HepG2 (cell line): ENCODE measurements at regions of chr2 and their contacts with region 1.

Region 1: GRCh38 chr2:86562922-86563649 is at the start of gene CHMP3:
- DNase-seq: peak; percentile 97
- ATAC-seq: peak; percentile 92
- H3K4me3 ChIP-seq: peak within 1 kb of the TSS; percentile 75 to 91 (median 88)
- H3K27ac ChIP-seq: peak within 1 kb of the TSS; percentile 97
- H3K4me1 ChIP-seq: peaks cover 40% of the 10 kb centered on the region
- H3K27me3 ChIP-seq: no peaks in the 10 kb centered on the region; a peak in 1 of 5 replicates
- CTCF ChIP-seq: 0 out of 2 replicates have a peak, but pooled peaks have one; percentile 16
- EP300 ChIP-seq: no peak
- POLR2A ChIP-seq: peak; percentile 79 to 87
- RAD21 ChIP-seq: 0 out of 2 replicates have a peak, but pooled peaks have one; percentile 28
- total RNA-seq, gene CHMP3: 114 and 154 TPM in 2 replicates

Region 2: DNA sequence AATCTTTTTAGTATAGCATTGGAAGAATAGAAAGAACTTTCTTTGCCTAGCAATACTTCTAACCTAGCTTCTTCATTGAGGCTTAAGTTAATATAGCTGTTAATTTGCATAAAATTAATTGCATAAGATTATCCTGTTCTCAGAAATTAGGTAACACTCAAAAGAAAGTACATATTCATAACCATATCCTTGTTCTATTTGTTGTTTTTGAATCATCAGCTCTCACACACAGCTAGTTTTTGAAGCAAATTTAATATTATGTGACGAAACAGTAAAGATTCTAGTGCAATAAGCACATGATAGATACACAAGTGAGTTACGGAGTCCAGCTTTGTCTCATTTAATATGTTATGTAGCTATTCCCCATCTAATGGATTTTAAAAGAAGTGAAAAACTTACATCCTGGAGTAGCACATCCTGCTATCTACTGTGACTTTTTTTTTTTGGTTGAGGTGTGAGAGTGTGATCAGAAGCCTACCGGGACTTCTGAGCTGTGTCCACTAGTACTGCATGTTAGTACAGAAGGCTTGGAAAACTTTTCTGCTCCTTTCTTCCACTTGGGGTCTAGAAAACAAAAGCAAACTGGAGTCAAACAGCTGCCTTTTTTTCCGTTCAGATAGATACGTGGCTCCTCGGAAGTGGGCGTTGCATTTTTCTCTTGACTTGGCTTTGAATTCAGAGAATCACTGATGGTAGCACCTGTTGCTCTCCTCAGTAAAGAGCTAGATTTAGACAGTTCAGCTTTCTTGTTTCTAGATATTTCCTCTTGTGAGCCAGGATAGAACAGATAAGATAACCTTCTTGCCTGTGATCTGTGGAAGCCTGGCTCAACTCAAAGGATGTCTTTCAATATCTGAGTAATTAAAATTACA is 94.7 kb before region 1 on chr2:
- CTCF ChIA-PET with region 1: no interaction called
- POLR2A ChIA-PET with region 1: no interaction called
- in situ Hi-C with region 1: no loop called
- intact Hi-C with region 1: no loop called
- DNase-seq: no peak
- ATAC-seq: no peak
- H3K4me3 ChIP-seq: no peak overlapping the region
- H3K27ac ChIP-seq: no peak overlapping the region
- H3K4me1 ChIP-seq: no peaks in the 10 kb centered on the region
- H3K27me3 ChIP-seq: no peaks in the 10 kb centered on the region
- CTCF ChIP-seq: no peak
- EP300 ChIP-seq: no peak
- POLR2A ChIP-seq: no peak
- RAD21 ChIP-seq: no peak

Region 3: DNA sequence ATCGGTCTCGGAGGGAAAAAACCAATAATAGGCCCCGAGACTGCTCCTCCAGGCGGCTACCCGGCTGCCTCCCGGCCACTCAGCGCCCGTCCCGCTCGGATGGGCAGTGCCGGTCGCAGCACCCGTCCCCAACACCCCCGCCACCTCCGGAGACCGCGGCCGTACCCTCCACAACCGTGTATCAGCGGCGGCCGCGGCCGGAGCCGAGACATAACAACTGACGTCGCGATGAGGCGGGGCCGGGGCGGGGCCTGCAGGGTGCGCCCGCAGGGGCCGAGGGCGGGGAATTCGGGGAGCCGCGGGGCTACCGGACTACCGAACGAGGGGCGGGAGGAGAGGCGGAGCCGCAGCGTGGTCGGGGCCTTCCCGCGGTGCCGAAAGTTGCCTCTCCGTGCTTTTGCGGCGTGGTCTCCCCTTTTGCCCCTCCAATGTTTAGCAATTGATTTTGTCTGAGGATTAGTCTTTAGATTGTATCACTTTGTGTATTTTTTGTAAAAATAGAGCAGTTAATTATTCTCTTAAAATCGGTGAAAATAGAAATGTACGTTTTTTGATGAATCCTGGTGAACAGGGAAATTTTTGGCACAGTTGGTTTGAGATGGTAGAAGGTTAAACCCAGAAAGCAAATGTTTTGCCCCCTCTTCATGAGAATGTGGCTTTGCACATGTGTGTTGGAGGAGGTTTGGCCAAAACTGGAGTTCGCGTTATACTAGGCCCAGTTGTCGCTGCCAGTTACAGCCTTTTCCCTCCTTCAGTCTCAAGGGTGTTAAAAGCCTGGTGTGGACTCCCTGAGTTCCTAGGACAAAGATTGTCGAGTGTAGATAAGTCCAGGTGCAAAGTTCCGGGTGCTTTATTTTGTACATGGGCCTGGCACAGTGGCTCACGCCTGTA is 60.8 kb after region 1 on chr2 and contains the start of gene RNF103:
- CTCF ChIA-PET with region 1: no interaction called
- POLR2A ChIA-PET with region 1: interaction called, 3 read pairs
- in situ Hi-C with region 1: no loop called
- intact Hi-C with region 1: loop called (anchors 5 kb)
- DNase-seq: peak; percentile 88
- ATAC-seq: peak; percentile 92
- H3K4me3 ChIP-seq: peak within 1 kb of the TSS; percentile 67 to 89 (median 87)
- H3K27ac ChIP-seq: peak within 1 kb of the TSS; percentile 90
- H3K4me1 ChIP-seq: peaks cover 62% of the 10 kb centered on the region
- H3K27me3 ChIP-seq: no peaks in the 10 kb centered on the region; a peak in 1 of 5 replicates
- CTCF ChIP-seq: peak; percentile 15; the same call in 1 of the 2 replicates
- EP300 ChIP-seq: peak in 1 of 2 experiments; percentile 36; a peak in 2 of 4 replicates
- POLR2A ChIP-seq: peak; percentile 90 to 98
- RAD21 ChIP-seq: no peak; the same call in 1 of the 2 replicates
- total RNA-seq, gene RNF103: 12.6 and 19.8 TPM in 2 replicates

Region 4: GRCh38 chr2:86750240-86750839 is 187.3 kb after region 1 on chr2:
- CTCF ChIA-PET with region 1: no interaction called
- POLR2A ChIA-PET with region 1: no interaction called
- in situ Hi-C with region 1: no loop called
- intact Hi-C with region 1: no loop called
- DNase-seq: no peak
- ATAC-seq: no peak
- H3K4me3 ChIP-seq: no peak overlapping the region
- H3K27ac ChIP-seq: no peak overlapping the region
- H3K4me1 ChIP-seq: no peaks in the 10 kb centered on the region
- H3K27me3 ChIP-seq: no peaks in the 10 kb centered on the region
- CTCF ChIP-seq: no peak
- EP300 ChIP-seq: no peak
- POLR2A ChIP-seq: no peak
- RAD21 ChIP-seq: no peak